Sigmoid colon (tissue), 7 donors: ENCODE measurements at regions of chr20 and their contacts with region 1.

Region 1: DNA sequence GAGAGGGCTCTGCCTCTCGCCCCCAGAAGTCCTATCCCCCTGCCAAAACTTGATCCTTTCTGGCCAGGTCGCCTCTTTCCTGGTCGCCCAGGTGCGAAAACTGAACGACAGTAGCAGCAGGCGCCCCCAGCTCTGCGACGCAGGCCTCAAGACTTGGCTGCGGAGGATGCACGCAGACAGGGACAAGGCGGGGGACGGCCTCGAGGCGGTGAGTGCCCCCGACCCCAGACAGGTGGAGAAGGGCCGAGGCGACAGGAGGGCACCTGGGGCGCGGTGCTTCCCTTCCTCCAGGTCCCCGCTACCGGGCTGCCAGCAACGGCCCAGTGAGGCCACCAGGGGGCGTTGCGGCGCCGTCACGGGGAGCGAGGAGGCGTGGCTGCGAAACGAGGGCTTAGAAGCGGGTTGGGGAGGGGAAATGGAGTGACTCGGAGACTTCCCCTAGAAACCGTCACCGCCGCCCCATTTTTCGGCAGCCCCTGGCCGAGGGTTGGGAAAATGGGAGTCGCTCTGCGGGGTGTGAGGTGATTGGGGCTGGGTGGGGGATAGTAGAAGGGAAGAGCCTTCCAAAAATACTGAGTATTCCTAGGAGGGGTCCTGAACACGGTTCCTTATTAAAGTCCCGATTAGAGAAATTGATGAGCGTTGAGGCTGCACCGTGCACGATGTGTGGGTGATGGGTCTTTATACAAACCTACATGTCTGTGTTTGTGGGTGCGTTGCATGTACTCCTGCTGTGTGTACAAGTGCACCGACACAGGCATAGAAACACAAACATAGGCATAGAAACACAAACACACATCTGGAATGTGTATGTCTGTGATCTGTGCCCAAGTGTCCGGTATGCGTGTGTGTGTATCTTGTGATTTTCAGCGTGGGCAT is 44.6 kb downstream of the ARHGAP40 start:
- DNase-seq: peak; percentile 74
- H3K4me3 ChIP-seq: peak overlapping the region in 2 of 4 donors; percentile 3 to 18
- H3K27ac ChIP-seq: no peak overlapping the region
- H3K4me1 ChIP-seq: peaks cover 0 to 11% (median 6%) of the 10 kb centered on the region in 4 donors
- H3K27me3 ChIP-seq: peaks cover 10 to 78% (median 32%) of the 10 kb centered on the region in 3 donors
- CTCF ChIP-seq: peak; percentile 63 to 87 (median 80)
- EP300 ChIP-seq: no peak
- POLR2A ChIP-seq: no peak

Region 2: GRCh38 chr20:38610521-38610920 is 35.7 kb before region 1 on chr20:
- intact Hi-C with region 1: no loop called
- DNase-seq: no peak
- H3K4me3 ChIP-seq: no peak overlapping the region
- H3K27ac ChIP-seq: no peak overlapping the region
- H3K4me1 ChIP-seq: no peaks in the 10 kb centered on the region
- H3K27me3 ChIP-seq: peaks cover 0 to 21% (median 0%) of the 10 kb centered on the region in 3 donors
- CTCF ChIP-seq: no peak
- EP300 ChIP-seq: no peak
- POLR2A ChIP-seq: no peak

Region 3: DNA sequence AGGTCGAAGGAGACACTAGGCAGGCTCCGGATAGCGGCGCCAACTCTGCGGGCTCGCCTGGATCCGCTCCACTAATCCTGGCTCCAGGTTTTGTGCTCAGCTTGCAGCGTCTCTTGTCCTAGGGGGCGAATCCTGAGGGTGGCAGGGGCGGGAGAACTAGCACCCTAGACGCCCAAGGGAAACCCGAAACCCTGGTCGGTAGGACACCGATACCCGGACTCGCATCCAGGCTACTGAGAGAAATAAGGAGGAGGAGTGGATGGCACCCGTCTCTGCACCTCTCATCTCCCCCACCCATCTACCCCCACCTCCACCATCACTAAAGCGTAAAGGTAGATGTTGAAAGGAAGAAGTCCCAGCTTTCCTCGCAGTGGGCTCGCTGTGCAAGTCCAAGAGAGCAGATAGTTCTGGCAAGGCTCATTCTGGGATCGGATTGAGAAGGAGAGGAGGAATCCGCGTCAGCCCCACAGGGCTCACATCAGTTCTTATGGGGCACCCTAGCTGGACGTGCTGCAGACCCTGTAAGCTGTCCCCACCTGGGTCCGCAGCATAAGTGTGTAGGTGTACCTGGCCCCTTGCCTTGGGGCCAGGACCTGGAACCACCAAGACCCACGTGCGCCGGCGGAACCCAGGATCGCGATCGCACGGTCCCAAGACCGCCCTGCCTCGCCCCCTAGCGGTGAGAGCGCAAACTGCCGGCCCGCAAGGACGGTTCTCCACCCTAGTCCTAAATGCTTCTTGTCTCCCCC is 84.9 kb after region 1 on chr20:
- intact Hi-C with region 1: loop called (anchors 1 kb)
- DNase-seq: peak; percentile 63
- H3K4me3 ChIP-seq: peak overlapping the region in 3 of 4 donors; percentile 5 to 31 (median 31)
- H3K27ac ChIP-seq: no peak overlapping the region
- H3K4me1 ChIP-seq: peaks cover 0 to 36% (median 17%) of the 10 kb centered on the region in 4 donors
- H3K27me3 ChIP-seq: peaks cover 58 to 97% (median 84%) of the 10 kb centered on the region in 3 donors
- CTCF ChIP-seq: peak; percentile 60 to 97 (median 76)
- EP300 ChIP-seq: no peak
- POLR2A ChIP-seq: no peak

Region 4: DNA sequence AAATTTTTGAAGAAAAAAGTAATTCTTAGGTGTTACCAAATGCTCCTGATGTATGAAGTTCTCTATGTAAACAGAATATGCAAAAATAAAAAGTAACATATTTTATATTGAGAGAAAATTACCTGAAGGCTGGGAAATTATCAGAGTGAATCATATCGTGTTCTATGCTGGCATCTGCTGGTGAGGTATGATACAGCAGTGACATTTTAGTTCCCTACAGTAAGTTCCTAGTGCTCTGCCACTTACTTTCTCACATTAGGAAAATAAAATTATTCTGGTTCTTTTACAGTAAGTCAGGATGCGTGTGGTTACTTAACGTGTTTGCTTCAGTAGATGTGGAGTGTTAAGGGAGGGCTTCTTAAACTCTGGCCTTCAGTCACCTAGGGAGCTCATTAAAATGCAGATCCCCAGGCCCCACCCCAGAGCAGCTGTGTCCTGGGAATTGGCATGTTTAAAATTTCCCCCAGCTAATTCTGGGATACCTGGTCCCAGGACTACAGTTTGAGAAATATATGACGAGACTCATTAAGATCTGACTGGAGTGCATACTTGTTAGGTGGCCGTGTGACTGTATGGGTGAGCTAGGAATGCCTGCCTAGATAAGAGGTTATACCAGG is 105.2 kb after region 1 on chr20:
- intact Hi-C with region 1: loop called (anchors 1 kb)
- DNase-seq: no peak
- H3K4me3 ChIP-seq: no peak overlapping the region
- H3K27ac ChIP-seq: no peak overlapping the region
- H3K4me1 ChIP-seq: peaks cover 0 to 21% (median 16%) of the 10 kb centered on the region in 4 donors
- H3K27me3 ChIP-seq: no peaks in the 10 kb centered on the region
- CTCF ChIP-seq: peak in 3 of 4 experiments; percentile 27 to 47 (median 34)
- EP300 ChIP-seq: no peak
- POLR2A ChIP-seq: no peak

Region 5: GRCh38 chr20:38893565-38894090 is 247.4 kb after region 1 on chr20:
- intact Hi-C with region 1: loop called (anchors 5 kb)
- DNase-seq: no peak
- H3K4me3 ChIP-seq: no peak overlapping the region
- H3K27ac ChIP-seq: no peak overlapping the region
- H3K4me1 ChIP-seq: peaks cover 0 to 10% (median 5%) of the 10 kb centered on the region in 4 donors
- H3K27me3 ChIP-seq: peaks cover 0 to 18% (median 17%) of the 10 kb centered on the region in 3 donors
- CTCF ChIP-seq: peak in 3 of 4 experiments; percentile 41 to 86 (median 53)
- EP300 ChIP-seq: no peak
- POLR2A ChIP-seq: no peak

Region 6: GRCh38 chr20:39019805-39020325 is 373.6 kb after region 1 on chr20:
- intact Hi-C with region 1: no loop called
- DNase-seq: no peak
- H3K4me3 ChIP-seq: no peak overlapping the region
- H3K27ac ChIP-seq: no peak overlapping the region
- H3K4me1 ChIP-seq: no peaks in the 10 kb centered on the region
- H3K27me3 ChIP-seq: no peaks in the 10 kb centered on the region
- CTCF ChIP-seq: no peak
- EP300 ChIP-seq: no peak
- POLR2A ChIP-seq: no peak